ENCODE measurements at regions of chr19 and their contacts with region 1.

Region 1: DNA sequence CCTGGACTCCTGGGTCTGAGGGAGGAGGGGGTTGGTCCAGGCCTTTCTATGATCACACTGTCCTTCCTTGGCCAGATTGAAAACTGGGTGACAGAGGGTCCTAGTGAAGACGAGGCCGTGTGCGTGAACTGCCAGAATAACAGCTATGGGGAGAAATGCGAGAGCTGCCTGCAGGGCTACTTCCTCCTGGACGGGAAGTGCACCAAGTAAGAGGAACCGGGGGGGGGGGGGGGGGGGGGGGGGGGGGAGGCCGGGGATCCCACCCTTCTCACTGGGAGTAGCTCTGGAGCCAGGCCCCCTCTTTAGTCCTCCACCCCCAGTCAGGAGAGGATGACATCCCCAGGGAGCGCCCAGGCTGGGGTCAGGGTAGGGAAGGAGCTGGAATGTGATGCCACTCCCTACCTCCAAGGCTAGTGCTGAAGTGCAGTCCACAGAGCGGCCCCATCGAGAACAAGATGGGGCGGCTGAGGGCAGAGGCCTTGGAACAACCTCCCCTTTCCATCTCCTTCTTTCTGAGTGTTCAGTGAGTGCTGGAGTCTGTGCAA is 19.4 kb downstream of the CNFN start:
- DNase-seq: no peak
- ATAC-seq: no peak
- H3K4me3 ChIP-seq: no peak overlapping the region
- H3K27ac ChIP-seq: no peak overlapping the region
- H3K4me1 ChIP-seq: no peaks in the 10 kb centered on the region
- CTCF ChIP-seq: no peak
- EP300 ChIP-seq: no peak
- POLR2A ChIP-seq: no peak
- RAD21 ChIP-seq: no peak

Region 2: GRCh38 chr19:42386974-42387707 is 16.4 kb after region 1 on chr19:
- CTCF ChIA-PET with region 1: interaction called, 21 read pairs
- POLR2A ChIA-PET with region 1: no interaction called
- DNase-seq: peak; percentile 95 to 100
- ATAC-seq: peak; percentile 92 to 97
- H3K4me3 ChIP-seq: peak overlapping the region; percentile 49
- H3K27ac ChIP-seq: peak overlapping the region; percentile 80 to 86
- H3K4me1 ChIP-seq: peaks cover 9% of the 10 kb centered on the region; the same call in 2 of the 3 replicates
- CTCF ChIP-seq: peak; percentile 93
- EP300 ChIP-seq: no peak
- POLR2A ChIP-seq: peak; percentile 98
- RAD21 ChIP-seq: peak; percentile 56 to 74